ENCODE measurements at regions of chr6 and their contacts with region 1.

Region 1: DNA sequence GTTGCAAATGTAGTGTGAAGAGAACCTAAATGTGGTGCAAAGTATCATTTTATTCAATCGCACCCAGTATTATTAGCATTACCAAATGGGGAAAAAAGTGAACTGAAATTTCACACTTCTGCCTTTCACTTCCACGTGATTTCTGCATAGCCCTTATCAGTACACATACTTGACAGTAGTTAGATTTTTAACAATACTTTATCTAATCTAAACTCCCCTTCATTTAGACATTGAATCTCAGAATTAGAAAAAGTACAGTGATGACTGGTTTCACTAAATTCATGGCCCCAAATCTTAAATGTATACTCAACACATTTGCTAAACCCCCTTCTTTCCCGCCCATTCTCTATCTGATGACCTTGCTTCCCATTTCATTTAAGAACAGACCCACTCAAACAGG is 14.3 kb downstream of the STX7 start:
- DNase-seq: peak; percentile 60
- ATAC-seq: peak; percentile 75
- H3K4me3 ChIP-seq: peak overlapping the region; percentile 22; the same call in 1 of the 2 replicates
- H3K27ac ChIP-seq: peak overlapping the region; percentile 76
- H3K4me1 ChIP-seq: peaks cover 53% of the 10 kb centered on the region
- H3K27me3 ChIP-seq: no peaks in the 10 kb centered on the region
- CTCF ChIP-seq: no peak
- EP300 ChIP-seq: peak; percentile 87 to 97
- POLR2A ChIP-seq: no peak
- RAD21 ChIP-seq: no peak

Region 2: GRCh38 chr6:132446141-132446854 is 52.3 kb before region 1 on chr6:
- CTCF ChIA-PET with region 1: no interaction called
- POLR2A ChIA-PET with region 1: no interaction called
- RAD21 ChIA-PET with region 1: no interaction called
- SMC1A ChIA-PET with region 1: no interaction called
- in situ Hi-C with region 1: no loop called
- intact Hi-C with region 1: no loop called
- DNase-seq: no peak
- ATAC-seq: no peak
- H3K4me3 ChIP-seq: no peak overlapping the region
- H3K27ac ChIP-seq: no peak overlapping the region
- H3K4me1 ChIP-seq: no peaks in the 10 kb centered on the region
- H3K27me3 ChIP-seq: no peaks in the 10 kb centered on the region
- CTCF ChIP-seq: no peak
- EP300 ChIP-seq: no peak
- POLR2A ChIP-seq: no peak
- RAD21 ChIP-seq: no peak

Region 3: DNA sequence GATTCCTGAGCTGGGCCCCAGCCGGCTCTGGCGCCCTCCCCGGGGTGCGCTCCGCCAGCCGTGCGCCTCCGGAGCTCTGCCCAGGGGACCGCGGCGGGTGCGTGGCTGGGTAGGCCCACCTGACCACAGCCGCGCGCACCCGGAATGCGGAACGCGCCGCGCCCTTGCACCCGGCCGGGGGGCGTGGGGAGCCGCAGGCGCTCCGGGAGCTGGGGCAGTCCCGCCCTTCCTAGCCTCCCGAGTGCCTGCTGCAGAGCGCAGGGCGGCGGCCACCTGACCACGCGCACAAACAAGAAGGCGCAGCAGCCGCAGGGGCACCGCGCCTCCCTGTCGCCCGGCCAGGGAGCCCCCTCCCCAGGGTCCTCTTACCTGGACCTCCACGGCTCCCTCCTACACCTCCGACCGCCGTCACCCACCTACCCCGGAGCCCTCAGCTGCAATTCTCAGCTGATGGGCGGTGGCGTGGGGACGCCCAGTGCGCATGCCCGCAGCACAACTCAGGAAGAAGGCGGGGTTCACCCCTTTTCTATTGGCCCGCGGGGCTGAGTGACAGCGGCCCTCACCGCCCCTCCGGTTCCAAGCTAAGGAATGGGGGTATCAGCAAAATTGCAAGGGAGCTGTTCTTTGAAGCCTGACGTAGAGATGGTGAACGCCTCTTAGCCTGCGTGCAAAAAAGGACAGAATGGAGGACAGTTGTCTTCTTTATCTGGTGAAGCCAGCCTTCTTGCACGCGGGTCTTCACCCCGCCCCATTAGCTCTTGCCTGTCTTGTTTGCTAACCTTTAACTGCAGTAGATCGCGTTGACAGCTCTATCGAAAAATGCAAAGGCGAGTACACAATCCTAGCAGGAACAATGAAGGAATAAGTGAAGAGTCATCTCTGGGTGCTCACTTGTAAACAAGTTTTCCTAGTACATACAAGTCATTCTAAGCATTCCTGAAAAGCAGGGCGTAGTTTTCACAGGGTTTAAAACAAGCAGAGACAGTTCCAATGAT is 14.3 kb after region 1 on chr6 and contains the start of gene STX7:
- CTCF ChIA-PET with region 1: interaction called, 10 read pairs
- POLR2A ChIA-PET with region 1: interaction called, 25 read pairs
- RAD21 ChIA-PET with region 1: interaction called, 26 read pairs
- SMC1A ChIA-PET with region 1: interaction called, 25 read pairs
- in situ Hi-C with region 1: no loop called
- intact Hi-C with region 1: loop called (anchors 2 kb)
- DNase-seq: peak; percentile 48
- ATAC-seq: peak; percentile 91
- H3K4me3 ChIP-seq: peak within 1 kb of the TSS; percentile 61
- H3K27ac ChIP-seq: peak within 1 kb of the TSS; percentile 63
- H3K4me1 ChIP-seq: peaks cover 6% of the 10 kb centered on the region
- H3K27me3 ChIP-seq: no peaks in the 10 kb centered on the region
- CTCF ChIP-seq: no peak
- EP300 ChIP-seq: no peak
- POLR2A ChIP-seq: peak; percentile 77
- RAD21 ChIP-seq: no peak
- polyA plus RNA-seq, gene STX7: 26.5 to 30.7 TPM

Region 4: GRCh38 chr6:132750455-132751248 is 252.0 kb after region 1 on chr6:
- CTCF ChIA-PET with region 1: no interaction called
- POLR2A ChIA-PET with region 1: no interaction called
- RAD21 ChIA-PET with region 1: interaction called, 11 read pairs
- SMC1A ChIA-PET with region 1: interaction called, 14 read pairs
- in situ Hi-C with region 1: no loop called
- intact Hi-C with region 1: no loop called
- DNase-seq: peak; percentile 69
- ATAC-seq: peak; percentile 91
- H3K4me3 ChIP-seq: peak overlapping the region; percentile 18; the same call in 1 of the 2 replicates
- H3K27ac ChIP-seq: peak overlapping the region; percentile 72
- H3K4me1 ChIP-seq: peaks cover 20% of the 10 kb centered on the region
- H3K27me3 ChIP-seq: no peaks in the 10 kb centered on the region
- CTCF ChIP-seq: no peak
- EP300 ChIP-seq: peak; percentile 44 to 47; a peak in 2 of 4 replicates
- POLR2A ChIP-seq: no peak
- RAD21 ChIP-seq: no peak

Region 5: GRCh38 chr6:134015719-134016557 is 1517.3 kb after region 1 on chr6:
- CTCF ChIA-PET with region 1: no interaction called
- POLR2A ChIA-PET with region 1: no interaction called
- RAD21 ChIA-PET with region 1: no interaction called
- SMC1A ChIA-PET with region 1: no interaction called
- in situ Hi-C with region 1: no loop called
- intact Hi-C with region 1: no loop called
- DNase-seq: no peak
- ATAC-seq: no peak
- H3K4me3 ChIP-seq: no peak overlapping the region
- H3K27ac ChIP-seq: no peak overlapping the region
- H3K4me1 ChIP-seq: no peaks in the 10 kb centered on the region
- H3K27me3 ChIP-seq: peaks cover 0 to 3% of the 10 kb centered on the region in 2 experiments; a peak in 1 of 4 replicates
- CTCF ChIP-seq: no peak
- EP300 ChIP-seq: no peak
- POLR2A ChIP-seq: no peak
- RAD21 ChIP-seq: no peak

Measured in GM12878 (cell line).